HepG2 (cell line): ENCODE measurements at regions of chr2 and their contacts with region 1.

Region 1: DNA sequence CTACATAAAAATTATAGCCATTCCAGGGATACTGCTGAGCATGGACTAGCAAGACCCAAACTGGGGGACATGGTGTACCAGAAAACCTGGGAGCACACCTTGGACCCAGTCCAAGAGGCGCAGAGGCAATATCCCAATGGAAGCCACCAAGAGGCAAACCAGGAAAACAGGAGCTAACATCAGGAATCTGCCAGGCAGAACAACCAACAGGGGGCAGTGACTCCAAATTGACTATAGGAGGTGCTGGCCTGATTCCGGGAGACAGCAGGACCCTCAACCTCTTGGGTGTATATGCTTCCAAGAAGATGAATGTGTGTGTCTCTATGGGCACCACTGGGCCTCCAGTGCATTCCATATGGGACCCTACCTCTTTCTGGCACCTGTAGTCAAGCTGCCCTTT is 172.7 kb upstream of the ARL4C start:
- DNase-seq: no peak
- ATAC-seq: no peak
- H3K4me3 ChIP-seq: no peak overlapping the region
- H3K27ac ChIP-seq: no peak overlapping the region
- H3K4me1 ChIP-seq: peaks cover 39% of the 10 kb centered on the region
- H3K27me3 ChIP-seq: no peaks in the 10 kb centered on the region
- CTCF ChIP-seq: peak; percentile 49
- EP300 ChIP-seq: no peak
- POLR2A ChIP-seq: no peak
- RAD21 ChIP-seq: peak; percentile 30; the same call in 1 of the 2 replicates

Region 2: DNA sequence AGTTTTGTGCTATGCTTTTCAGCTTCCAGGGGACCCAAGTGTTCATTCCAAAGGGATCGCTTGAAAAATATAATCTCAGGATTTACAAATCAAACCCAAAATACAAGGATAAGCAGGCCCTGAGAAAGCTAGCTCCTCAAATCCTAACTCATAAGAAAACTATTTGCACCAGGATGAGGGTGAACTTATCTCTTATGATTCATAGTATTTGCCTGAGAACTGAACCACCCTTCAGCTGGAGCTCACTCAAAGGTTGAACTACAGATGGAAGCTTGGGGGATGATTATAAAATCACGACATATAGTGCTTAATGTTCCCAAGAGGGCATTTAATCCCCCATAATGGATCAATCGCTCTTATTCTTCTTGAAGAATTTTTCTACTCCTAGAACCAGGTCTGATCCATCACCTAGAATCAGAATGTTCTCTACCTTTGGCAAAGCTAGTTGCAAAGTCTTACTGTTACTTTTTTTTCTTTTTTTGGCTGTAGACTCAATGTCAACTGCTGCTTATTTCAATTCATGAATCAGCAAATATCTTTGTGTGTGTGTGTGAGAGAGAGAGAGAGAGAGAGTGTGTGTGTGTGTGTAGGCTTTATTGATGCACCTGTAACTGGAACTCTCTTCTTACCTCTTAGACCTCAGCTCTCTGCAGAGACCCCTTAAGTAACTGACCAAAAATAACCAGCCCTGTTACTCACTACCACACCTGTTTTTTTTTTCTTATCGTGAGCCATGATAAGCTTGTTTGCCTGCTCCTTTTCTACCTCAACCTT is 217.6 kb before region 1 on chr2:
- CTCF ChIA-PET with region 1: no interaction called
- POLR2A ChIA-PET with region 1: no interaction called
- in situ Hi-C with region 1: no loop called
- intact Hi-C with region 1: no loop called
- DNase-seq: no peak
- ATAC-seq: no peak
- H3K4me3 ChIP-seq: no peak overlapping the region
- H3K27ac ChIP-seq: no peak overlapping the region
- H3K4me1 ChIP-seq: no peaks in the 10 kb centered on the region
- H3K27me3 ChIP-seq: peaks cover 0 to 5% of the 10 kb centered on the region in 2 experiments; a peak in 2 of 5 replicates
- CTCF ChIP-seq: no peak
- EP300 ChIP-seq: no peak
- POLR2A ChIP-seq: no peak
- RAD21 ChIP-seq: no peak

Region 3: DNA sequence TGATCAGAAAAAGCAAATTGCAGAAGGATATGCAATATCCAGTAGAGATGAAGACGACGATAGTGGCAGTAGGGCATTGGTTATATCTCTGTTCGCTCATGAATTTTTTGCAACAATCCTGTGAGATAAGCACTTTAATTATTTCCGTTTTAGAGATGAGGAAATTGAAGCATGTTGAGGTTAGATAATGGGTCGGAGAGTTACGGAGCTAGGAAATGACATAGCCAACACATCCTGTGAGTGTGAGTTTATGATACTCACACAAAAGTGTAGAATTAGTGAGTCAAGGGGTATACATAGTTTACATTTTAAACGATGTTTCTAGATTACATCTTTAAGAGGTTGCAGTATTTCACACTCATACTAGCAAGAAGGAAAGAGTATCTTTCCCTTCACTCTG is 49.6 kb before region 1 on chr2:
- CTCF ChIA-PET with region 1: no interaction called
- POLR2A ChIA-PET with region 1: no interaction called
- in situ Hi-C with region 1: loop called (anchors 5 kb)
- intact Hi-C with region 1: no loop called
- DNase-seq: no peak
- ATAC-seq: no peak
- H3K4me3 ChIP-seq: no peak overlapping the region
- H3K27ac ChIP-seq: no peak overlapping the region
- H3K4me1 ChIP-seq: peaks cover 17% of the 10 kb centered on the region
- H3K27me3 ChIP-seq: peaks cover 2 to 18% of the 10 kb centered on the region in 2 experiments; a peak in 3 of 5 replicates
- CTCF ChIP-seq: no peak
- EP300 ChIP-seq: no peak
- POLR2A ChIP-seq: no peak
- RAD21 ChIP-seq: no peak